ENCODE measurements at regions of chr2 and their contacts with region 1.

Region 1: DNA sequence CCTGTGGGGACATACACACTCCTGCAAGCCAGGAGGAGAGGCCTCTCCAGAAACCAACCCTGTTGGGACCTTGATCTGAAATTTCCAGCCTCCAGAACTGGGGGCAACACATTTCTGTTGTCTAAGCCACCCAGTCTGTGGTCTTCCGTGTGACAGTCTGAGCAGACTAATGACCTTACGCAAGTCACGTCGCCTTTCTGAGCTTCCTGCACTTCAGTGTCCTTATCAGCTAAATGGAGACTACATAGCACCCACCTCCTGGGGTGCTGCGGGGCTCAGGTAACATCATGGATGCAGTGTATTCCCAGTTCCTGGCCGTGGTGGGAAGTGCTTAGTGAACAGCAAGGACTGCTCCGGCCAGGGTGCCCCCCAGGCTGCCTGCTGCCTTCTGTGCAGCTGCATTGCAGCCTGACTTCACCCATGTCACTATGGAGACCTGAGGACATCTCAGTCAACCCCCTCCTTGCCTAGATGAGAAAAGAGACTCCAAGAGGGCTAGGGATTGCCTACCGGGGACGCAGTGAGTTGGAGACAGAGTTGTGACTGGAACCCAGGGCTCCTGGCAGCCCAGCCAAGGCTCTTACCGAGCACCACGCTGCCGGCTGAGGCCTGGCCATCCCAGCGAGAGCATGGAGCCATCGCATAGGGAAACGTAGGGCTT is 61.2 kb upstream of the FZD5 start:
- DNase-seq: no peak
- H3K4me3 ChIP-seq: no peak overlapping the region
- H3K27ac ChIP-seq: no peak overlapping the region
- H3K4me1 ChIP-seq: no peaks in the 10 kb centered on the region
- H3K27me3 ChIP-seq: no peaks in the 10 kb centered on the region
- CTCF ChIP-seq: no peak
- POLR2A ChIP-seq: no peak

Region 2: DNA sequence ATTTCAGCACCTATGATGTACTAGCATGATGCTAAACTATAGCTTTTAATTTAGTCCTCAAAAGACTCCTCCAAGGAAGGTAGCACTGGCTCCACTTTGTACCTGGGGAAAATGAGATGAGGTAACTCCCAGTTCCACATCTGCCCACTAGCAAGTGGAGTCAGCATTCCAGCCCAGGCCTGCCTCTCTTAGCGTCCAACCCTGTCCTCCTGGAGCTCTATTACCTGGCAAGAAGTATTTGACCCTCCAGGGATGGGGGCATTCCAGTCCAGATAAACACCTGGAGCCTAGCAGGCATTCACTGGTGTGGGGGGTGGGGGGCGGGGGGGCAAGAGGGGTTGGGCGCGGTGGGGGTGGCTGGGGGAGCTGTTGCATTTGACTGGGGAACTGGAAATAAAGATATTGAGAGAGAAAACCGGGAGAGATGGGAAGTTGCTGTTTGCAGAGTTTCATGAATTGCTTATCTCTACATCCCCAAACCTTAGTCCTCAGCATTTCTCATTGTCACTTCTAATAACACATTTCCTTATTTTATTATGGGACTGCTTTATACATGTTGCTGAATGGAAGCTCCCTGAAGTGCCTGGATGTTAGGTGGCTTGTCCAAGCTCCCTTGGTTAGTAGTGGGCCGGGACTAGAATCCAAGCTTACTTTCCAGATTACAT is 39.2 kb before region 1 on chr2:
- intact Hi-C with region 1: loop called (anchors 1 kb)
- DNase-seq: no peak
- H3K4me3 ChIP-seq: no peak overlapping the region
- H3K27ac ChIP-seq: no peak overlapping the region
- H3K4me1 ChIP-seq: no peaks in the 10 kb centered on the region
- H3K27me3 ChIP-seq: no peaks in the 10 kb centered on the region
- CTCF ChIP-seq: no peak
- POLR2A ChIP-seq: no peak

Region 3: DNA sequence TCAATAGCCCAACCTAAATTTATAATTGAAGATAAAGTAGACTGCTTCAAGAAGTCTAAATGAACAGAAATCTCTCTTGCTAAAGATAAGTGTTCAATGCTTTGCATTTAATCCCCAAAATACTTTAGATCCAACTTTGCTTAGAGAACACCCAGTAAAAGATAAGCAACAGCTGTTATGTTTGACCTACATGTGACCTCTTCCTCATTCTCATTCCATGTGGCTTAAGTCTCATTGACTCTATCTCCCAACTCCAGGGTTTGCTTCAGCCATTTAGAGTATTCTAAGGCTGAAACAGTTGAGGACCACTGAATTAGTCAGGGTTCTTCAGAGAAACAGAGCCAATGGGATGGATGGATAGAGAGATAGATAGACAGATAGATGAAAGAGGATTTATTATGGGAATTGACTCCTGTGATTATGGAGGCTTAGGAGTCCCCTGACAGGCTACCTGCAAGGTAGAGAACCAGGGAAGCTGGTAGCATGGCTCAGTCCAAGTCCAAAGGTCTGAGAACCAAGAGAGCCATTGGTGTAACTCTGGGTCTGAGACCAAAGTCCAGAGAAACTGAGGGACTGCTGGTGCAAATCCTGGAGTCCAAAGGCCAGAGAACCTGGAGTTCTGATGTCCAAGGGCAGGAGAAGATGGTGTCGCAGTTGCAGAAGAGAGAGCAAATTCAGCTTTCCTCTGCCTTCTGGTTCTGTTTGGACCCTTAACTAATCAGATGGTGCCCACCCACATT is 261.4 kb after region 1 on chr2:
- intact Hi-C with region 1: no loop called
- DNase-seq: peak in 1 of 2 donors; percentile 32
- H3K4me3 ChIP-seq: no peak overlapping the region
- H3K27ac ChIP-seq: no peak overlapping the region
- H3K4me1 ChIP-seq: no peaks in the 10 kb centered on the region
- H3K27me3 ChIP-seq: no peaks in the 10 kb centered on the region
- CTCF ChIP-seq: no peak
- POLR2A ChIP-seq: no peak

Region 4: GRCh38 chr2:208619993-208620392 is 789.1 kb after region 1 on chr2:
- intact Hi-C with region 1: no loop called
- DNase-seq: no peak
- H3K4me3 ChIP-seq: no peak overlapping the region
- H3K27ac ChIP-seq: no peak overlapping the region
- H3K4me1 ChIP-seq: no peaks in the 10 kb centered on the region
- H3K27me3 ChIP-seq: no peaks in the 10 kb centered on the region
- CTCF ChIP-seq: no peak
- POLR2A ChIP-seq: no peak

Measured in vagina (tissue), 2 donors.